HepG2 (cell line): ENCODE measurements at regions of chr18 and their contacts with region 1.

Region 1: DNA sequence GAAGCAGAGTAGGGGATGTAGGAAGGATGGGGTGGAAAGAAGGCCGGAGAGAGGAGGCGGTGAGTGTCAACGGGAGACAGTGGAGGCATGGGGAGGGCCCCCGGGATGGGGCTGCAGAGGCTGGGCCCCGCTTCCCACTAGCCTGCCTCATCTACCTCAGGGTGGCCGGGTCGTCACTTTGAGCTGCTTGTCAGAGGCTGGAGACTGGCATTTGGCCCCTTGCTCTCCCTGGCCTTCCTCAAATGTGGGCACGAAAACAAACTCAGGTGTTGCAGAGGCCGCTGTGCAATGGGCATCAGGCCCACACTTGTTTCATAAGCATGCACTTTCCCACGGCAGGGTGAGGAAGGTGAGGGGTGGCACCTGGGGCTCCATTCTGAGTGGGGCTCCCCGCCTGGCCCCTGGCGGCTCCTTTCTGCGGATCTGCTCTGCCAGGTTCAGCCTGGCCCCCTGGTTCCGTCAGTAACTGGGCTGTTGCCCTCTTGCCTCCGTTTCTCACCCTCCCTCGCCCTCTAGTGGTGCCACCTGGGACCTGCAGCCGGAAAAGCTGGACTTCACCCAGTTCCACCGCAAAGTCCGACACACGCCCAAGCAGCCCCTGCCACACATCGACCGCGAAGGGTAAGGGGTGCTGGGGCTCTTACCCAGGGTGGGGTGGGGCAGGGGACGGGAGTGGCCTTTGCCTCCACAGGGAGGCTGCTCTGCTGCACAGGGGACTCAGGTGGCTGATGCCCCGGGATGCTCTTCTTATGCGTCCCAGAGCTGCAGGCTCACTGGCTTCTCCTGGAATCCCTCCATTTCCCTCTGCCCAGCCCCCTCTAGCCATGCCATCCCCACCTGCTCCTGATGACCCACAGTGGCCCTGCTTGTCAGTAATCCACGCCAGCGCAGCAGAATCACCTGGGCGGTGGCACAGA is 125.4 kb downstream of the CTIF start:
- DNase-seq: peak; percentile 42
- ATAC-seq: peak; percentile 65
- H3K4me3 ChIP-seq: no peak overlapping the region
- H3K27ac ChIP-seq: no peak overlapping the region
- H3K4me1 ChIP-seq: peaks cover 17% of the 10 kb centered on the region
- H3K27me3 ChIP-seq: no peaks in the 10 kb centered on the region
- CTCF ChIP-seq: peak; percentile 96
- EP300 ChIP-seq: no peak
- POLR2A ChIP-seq: no peak
- RAD21 ChIP-seq: peak; percentile 86

Region 2: DNA sequence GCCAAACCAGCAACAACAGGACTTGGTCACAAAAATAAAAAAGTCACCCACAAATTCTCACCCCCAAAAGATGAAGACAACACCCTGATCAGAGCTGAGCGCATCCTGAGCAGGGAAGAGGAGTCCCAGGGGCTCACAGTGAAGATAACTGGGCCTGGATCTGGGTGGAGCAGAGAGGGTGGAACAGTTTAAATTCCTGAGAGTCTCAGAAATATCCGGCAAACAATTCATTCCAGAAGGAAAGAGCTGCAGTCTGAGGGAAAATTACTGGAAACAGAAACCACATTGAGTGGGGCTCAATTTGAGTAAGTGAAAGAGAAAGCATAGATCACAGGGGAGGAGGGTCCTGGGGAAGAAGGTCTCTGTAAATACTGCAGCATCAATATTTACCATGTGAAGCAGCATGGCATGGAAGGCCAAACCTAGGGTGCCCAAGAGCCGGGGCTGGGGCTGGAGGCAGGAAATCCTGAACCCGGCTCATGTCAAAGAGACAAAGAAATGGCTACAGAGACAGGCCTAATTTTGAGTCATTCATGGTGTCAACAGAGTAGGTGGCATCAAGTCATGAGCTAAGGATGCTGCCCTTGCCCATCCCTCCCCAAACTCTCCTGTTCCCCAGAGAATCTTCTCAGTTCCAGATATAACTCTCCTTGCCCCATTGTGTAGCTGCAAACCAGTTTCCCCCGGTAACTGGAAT is 193.6 kb before region 1 on chr18:
- CTCF ChIA-PET with region 1: interaction called, 21 read pairs
- POLR2A ChIA-PET with region 1: no interaction called
- in situ Hi-C with region 1: loop called (anchors 5 kb)
- intact Hi-C with region 1: no loop called
- DNase-seq: peak; percentile 43
- ATAC-seq: no peak
- H3K4me3 ChIP-seq: no peak overlapping the region
- H3K27ac ChIP-seq: no peak overlapping the region
- H3K4me1 ChIP-seq: peaks cover 23% of the 10 kb centered on the region
- H3K27me3 ChIP-seq: peaks cover 2 to 11% of the 10 kb centered on the region in 2 experiments; a peak in 2 of 5 replicates
- CTCF ChIP-seq: no peak
- EP300 ChIP-seq: no peak
- POLR2A ChIP-seq: no peak
- RAD21 ChIP-seq: no peak

Region 3: DNA sequence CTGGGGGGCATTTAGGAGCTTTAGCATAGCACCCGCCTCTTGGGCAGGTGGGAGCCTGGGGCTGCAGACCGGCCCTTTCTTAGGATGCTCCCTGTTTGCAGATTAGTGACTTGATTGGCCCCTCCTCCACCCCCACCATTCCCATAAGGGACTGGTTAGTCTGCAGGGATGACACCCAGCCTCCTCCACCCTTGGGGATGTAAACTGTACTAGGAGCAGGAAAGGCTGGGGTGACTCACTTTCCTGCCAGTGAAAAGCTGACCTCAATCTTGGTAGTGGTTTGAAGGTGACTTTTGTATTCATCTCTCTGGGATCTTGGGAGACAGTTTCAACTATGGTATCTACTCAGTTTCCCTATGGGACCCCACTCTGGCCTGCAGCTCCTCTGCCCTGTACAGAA is 101.1 kb before region 1 on chr18:
- CTCF ChIA-PET with region 1: no interaction called
- POLR2A ChIA-PET with region 1: no interaction called
- in situ Hi-C with region 1: no loop called
- intact Hi-C with region 1: no loop called
- DNase-seq: no peak
- ATAC-seq: no peak
- H3K4me3 ChIP-seq: no peak overlapping the region
- H3K27ac ChIP-seq: no peak overlapping the region
- H3K4me1 ChIP-seq: peaks cover 49% of the 10 kb centered on the region
- H3K27me3 ChIP-seq: no peaks in the 10 kb centered on the region
- CTCF ChIP-seq: no peak
- EP300 ChIP-seq: no peak
- POLR2A ChIP-seq: no peak
- RAD21 ChIP-seq: no peak

Region 4: DNA sequence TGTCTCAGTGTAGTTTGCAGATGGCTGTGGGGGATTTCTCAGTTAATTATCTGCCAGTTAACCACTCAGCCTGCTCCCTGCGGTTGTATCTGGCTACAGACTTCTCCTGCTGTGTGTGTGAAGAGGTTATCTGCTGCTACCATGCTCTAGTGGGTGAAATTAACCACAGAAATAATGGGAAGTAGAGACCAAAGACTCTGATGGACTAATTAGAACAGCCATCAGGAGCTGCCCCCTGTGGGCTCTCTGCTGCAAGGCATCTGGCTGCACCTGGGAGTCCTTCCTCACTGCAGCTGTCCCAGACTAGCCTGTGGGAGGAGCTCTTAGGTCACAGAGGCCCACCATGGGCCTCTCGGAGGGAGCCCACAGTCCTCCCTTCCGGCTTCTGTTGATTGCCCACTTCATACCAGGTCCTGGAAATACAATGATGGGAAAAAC is 58.8 kb before region 1 on chr18:
- CTCF ChIA-PET with region 1: interaction called, 8 read pairs
- POLR2A ChIA-PET with region 1: no interaction called
- in situ Hi-C with region 1: loop called (anchors 5 kb)
- intact Hi-C with region 1: loop called (anchors 2 kb)
- DNase-seq: peak; percentile 73
- ATAC-seq: peak; percentile 99
- H3K4me3 ChIP-seq: no peak overlapping the region
- H3K27ac ChIP-seq: no peak overlapping the region
- H3K4me1 ChIP-seq: peaks cover 34% of the 10 kb centered on the region
- H3K27me3 ChIP-seq: no peaks in the 10 kb centered on the region
- CTCF ChIP-seq: peak; percentile 88
- EP300 ChIP-seq: peak in 1 of 2 experiments; percentile 13; a peak in 1 of 4 replicates
- POLR2A ChIP-seq: no peak
- RAD21 ChIP-seq: peak; percentile 92

Region 5: DNA sequence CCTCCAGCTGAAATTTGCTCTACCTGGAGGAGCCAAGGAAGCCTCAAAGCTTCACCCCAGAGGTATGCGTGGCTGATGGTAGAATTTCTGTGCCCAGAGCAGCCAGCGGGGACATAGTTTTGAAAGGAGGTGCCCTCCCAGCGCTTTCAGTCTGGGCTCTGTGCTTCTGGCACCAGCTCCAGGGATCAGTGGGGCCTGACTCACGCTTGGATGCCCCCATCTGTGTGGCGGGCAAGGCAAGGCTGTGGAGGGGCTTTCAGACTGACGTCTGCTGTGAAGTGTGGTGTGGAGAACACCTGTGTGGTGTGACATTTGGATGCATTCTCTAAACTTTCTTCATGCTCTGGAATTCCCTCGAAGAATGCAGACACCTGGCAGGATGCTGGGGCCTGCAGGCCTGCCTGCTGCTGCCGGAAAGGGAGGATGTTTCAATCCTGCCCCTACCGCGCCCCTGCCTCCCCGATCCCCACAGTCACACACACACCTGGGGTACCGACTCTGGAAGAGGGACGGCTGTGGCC is 41.2 kb before region 1 on chr18:
- CTCF ChIA-PET with region 1: no interaction called
- POLR2A ChIA-PET with region 1: no interaction called
- in situ Hi-C with region 1: no loop called
- intact Hi-C with region 1: no loop called
- DNase-seq: no peak
- ATAC-seq: no peak
- H3K4me3 ChIP-seq: no peak overlapping the region
- H3K27ac ChIP-seq: no peak overlapping the region
- H3K4me1 ChIP-seq: peaks cover 9% of the 10 kb centered on the region
- H3K27me3 ChIP-seq: no peaks in the 10 kb centered on the region
- CTCF ChIP-seq: no peak
- EP300 ChIP-seq: no peak
- POLR2A ChIP-seq: no peak
- RAD21 ChIP-seq: no peak

Region 6: DNA sequence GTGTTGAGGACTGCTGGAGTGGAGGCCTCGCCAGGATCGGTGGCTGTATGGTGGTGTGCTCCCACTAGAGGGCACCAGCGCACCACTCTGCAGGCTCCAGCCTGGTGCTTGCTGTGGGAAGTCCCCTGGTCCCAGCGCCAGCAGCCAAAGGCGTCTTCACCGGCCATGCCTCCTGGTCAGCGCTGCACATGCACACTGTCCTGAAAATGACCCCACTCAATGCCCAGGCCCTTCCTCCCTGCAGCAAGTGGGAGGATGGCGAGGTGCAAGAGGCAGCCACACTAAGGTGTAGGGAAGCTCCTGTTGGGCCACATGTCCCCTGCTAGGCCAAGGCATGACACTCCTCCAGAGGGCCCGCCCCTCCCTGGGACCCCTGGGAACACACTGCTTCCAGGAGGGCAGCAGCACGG is 11.2 kb after region 1 on chr18:
- CTCF ChIA-PET with region 1: no interaction called
- POLR2A ChIA-PET with region 1: no interaction called
- in situ Hi-C with region 1: no loop called
- intact Hi-C with region 1: no loop called
- DNase-seq: peak; percentile 58
- ATAC-seq: peak; percentile 96
- H3K4me3 ChIP-seq: no peak overlapping the region
- H3K27ac ChIP-seq: no peak overlapping the region
- H3K4me1 ChIP-seq: peaks cover 39% of the 10 kb centered on the region
- H3K27me3 ChIP-seq: no peaks in the 10 kb centered on the region
- CTCF ChIP-seq: peak; percentile 99
- EP300 ChIP-seq: no peak
- POLR2A ChIP-seq: no peak
- RAD21 ChIP-seq: peak; percentile 97